ENCODE measurements at regions of chr9 and their contacts with region 1.

Region 1: DNA sequence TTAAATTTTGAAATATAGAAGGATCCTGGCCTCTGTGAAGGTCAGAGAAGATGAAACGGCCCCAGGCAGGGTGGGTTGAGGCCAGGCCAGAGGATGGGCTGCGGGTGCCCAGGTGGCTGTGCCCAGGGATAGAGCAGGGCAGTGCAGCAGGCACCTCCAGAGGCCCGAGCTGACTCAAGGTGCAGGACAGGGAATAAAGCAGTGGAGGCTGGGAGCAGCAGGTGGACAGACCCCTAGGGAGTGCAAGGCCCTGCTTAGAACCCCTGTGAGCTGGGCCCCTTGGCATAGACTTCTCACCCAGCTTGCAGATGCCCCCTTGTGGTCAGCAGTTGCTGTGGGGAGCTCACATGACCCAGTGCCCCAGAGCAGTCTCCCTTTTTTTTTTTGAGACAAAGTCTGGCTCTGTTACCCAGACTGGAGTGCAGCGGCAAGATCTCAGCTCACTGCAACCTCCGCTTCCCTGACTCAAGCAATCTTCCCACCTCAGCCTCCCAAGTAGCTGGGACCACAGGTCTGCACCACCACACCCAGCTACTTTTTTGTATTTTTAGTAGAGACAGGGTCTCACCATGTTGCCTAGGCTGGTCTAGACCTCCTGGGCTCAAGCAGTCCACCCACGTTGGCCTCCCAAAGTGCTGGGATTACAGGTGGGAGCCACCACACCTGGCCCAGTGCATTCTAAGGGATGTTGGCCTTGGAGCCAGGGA is 118.8 kb downstream of the WNK2 start:
- DNase-seq: peak; percentile 69
- H3K4me3 Mint-ChIP-seq: no peak overlapping the region
- H3K27ac Mint-ChIP-seq: no peak overlapping the region
- H3K4me1 Mint-ChIP-seq: peaks cover 2% of the 10 kb centered on the region
- H3K27me3 Mint-ChIP-seq: no peaks in the 10 kb centered on the region

Region 2: GRCh38 chr9:92954049-92954861 is 348.4 kb before region 1 on chr9:
- CTCF ChIA-PET with region 1: interaction called, 3 read pairs
- POLR2A ChIA-PET with region 1: no interaction called
- intact Hi-C with region 1: loop called (anchors 2 kb)
- DNase-seq: peak; percentile 94
- H3K4me3 Mint-ChIP-seq: peak overlapping the region; percentile 64
- H3K27ac Mint-ChIP-seq: peak overlapping the region; percentile 96
- H3K4me1 Mint-ChIP-seq: peaks cover 74% of the 10 kb centered on the region
- H3K27me3 Mint-ChIP-seq: no peaks in the 10 kb centered on the region

Region 3: DNA sequence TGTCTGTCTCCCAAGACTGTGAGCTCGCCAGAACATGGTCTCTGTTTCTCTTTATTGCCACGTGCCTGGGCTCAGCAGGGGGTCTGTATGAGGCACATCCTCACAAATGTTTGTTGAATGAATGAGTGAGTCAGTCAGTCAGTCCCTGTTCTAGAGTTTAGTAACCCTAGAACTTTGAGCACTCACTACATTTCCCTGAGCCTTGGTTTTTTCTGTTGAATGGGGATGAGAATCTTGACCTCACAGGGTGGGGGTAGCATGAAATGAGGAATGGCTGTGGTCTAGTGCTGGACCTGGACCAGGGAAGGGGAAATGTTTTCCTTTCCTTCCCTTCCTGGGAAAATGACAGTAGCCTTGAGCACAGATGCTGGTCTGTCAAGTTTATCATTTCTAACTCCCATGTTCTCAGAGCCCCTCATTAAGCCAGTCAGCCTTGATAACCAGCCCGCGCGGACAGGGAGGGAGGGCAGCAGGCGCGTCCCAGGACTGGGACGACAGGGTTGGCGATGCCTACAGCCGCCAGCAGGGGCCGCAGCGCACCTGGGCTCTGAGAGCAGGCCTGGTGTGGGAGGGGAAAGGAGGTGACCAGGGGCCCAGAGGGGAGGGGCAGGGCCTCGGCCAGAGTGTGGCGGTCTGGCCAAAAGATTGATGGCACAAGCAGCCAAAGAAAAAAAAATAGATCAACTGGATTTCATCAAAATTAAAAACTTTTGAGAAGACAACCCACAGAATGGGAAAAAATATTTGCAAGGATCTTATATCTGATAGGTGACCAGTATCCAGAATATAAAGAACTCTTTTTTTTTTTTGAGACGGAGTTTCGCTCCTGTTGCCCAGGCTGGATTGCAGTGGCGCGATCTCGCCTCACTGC is 142.9 kb before region 1 on chr9:
- CTCF ChIA-PET with region 1: interaction called, 9 read pairs
- POLR2A ChIA-PET with region 1: no interaction called
- intact Hi-C with region 1: loop called (anchors 1 kb)
- DNase-seq: peak; percentile 84
- H3K4me3 Mint-ChIP-seq: no peak overlapping the region
- H3K27ac Mint-ChIP-seq: no peak overlapping the region
- H3K4me1 Mint-ChIP-seq: peaks cover 24% of the 10 kb centered on the region
- H3K27me3 Mint-ChIP-seq: no peaks in the 10 kb centered on the region